ENCODE measurements at regions of chr3 and their contacts with region 1.

Region 1: GRCh38 chr3:129723558-129724324 is 117.3 kb upstream of the PLXND1 start:
- DNase-seq: no peak

Region 2: GRCh38 chr3:129657261-129658046 is 66.3 kb before region 1 on chr3:
- intact Hi-C with region 1: loop called (anchors 5 kb)
- DNase-seq: no peak

Region 3: GRCh38 chr3:129688271-129688895 is 35.4 kb before region 1 on chr3:
- intact Hi-C with region 1: loop called (anchors 5 kb)
- DNase-seq: peak; percentile 81

Region 4: GRCh38 chr3:129950318-129951046 is 226.7 kb after region 1 on chr3:
- intact Hi-C with region 1: no loop called
- DNase-seq: no peak